SK-N-SH (cell line): ENCODE measurements at regions of chr6 and their contacts with region 1.

Region 1: GRCh38 chr6:131909408-131910218 is 41.6 kb downstream of the CCN2 start:
- DNase-seq: peak; percentile 42
- H3K4me3 ChIP-seq: no peak overlapping the region; a peak in 1 of 4 replicates
- H3K27ac ChIP-seq: no peak overlapping the region
- H3K4me1 ChIP-seq: no peaks in the 10 kb centered on the region
- H3K27me3 ChIP-seq: peaks cover 51% of the 10 kb centered on the region
- CTCF ChIP-seq: peak; percentile 88
- EP300 ChIP-seq: no peak
- RAD21 ChIP-seq: peak; percentile 64

Region 2: DNA sequence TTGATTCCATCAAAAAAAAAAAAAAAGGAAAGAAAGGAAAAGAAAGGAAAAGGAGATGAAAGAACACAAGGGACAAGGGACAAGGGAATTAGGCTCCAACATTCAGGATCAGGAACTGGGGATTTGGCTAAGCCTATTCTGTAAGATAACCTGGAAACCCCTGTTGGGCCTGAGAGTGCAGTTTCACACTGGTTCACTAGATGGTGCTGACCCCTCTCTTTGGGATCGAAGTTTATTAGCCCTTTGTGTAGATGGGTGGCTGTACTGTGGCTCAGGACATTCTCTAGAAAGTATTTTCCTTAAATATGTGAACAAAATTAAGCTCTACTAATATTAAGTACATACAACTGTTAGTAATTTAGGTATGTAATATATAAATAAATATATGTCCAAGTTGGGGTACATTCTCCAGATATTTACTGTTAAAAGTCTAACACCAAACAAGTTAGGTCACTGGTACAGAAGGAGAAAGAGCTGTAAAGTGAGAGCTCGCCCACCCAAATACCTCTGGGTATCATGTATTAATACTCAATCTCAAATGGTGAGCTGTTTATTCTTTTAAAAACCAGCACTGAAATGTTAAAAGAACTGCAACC is 214.7 kb before region 1 on chr6:
- CTCF ChIA-PET with region 1: interaction called, 21 read pairs
- POLR2A ChIA-PET with region 1: no interaction called
- DNase-seq: peak; percentile 60
- H3K4me3 ChIP-seq: peak overlapping the region in 1 of 2 experiments; percentile 46; a peak in 1 of 4 replicates
- H3K27ac ChIP-seq: no peak overlapping the region
- H3K4me1 ChIP-seq: no peaks in the 10 kb centered on the region
- H3K27me3 ChIP-seq: peaks cover 12% of the 10 kb centered on the region; the same call in 1 of the 2 replicates
- CTCF ChIP-seq: peak; percentile 74
- EP300 ChIP-seq: no peak
- RAD21 ChIP-seq: peak; percentile 72

Region 3: DNA sequence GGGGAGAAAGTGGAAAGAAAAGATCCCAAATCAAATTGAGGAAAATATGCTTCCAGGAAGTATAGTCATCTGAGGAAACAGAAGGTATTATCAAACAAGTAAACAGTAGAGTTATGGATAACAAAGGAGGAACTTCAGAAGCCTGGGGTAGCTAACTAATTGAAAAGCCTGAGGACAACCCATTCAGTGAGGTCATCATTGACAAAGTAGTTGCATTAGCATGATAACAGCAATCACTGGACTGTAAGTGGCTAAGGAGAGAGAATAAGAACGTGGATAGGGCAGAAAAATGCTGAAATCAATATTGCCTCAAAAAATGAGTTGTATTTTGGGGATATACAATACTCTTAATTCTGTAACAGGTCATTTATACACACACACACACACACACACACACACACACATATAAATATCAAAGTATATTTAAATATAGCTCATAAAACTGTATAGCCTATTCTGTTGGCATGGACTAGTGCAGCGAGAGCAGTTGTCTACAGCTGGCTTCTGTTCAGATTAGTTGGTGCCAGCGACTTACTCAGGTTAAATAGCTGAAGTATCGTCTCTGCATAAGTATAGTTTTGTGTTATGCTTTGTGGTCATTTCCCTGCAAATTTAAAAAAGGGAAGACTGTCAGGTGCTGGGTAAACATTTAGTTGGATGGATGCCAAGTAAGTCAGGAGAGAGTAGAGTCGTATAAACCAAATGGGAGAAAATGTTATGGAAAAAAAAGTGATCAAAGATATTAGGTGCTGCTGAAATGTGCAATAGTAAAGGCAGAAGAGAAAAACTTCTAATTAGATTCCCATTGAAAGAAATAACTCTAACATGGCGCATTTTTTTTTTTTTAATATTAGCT is 165.0 kb before region 1 on chr6:
- CTCF ChIA-PET with region 1: no interaction called
- POLR2A ChIA-PET with region 1: no interaction called
- DNase-seq: no peak
- H3K4me3 ChIP-seq: no peak overlapping the region
- H3K27ac ChIP-seq: no peak overlapping the region
- H3K4me1 ChIP-seq: no peaks in the 10 kb centered on the region
- H3K27me3 ChIP-seq: peaks cover 12% of the 10 kb centered on the region; the same call in 1 of the 2 replicates
- CTCF ChIP-seq: no peak
- EP300 ChIP-seq: no peak
- RAD21 ChIP-seq: no peak

Region 4: GRCh38 chr6:131897050-131897565 is 12.5 kb before region 1 on chr6:
- CTCF ChIA-PET with region 1: interaction called, 11 read pairs
- POLR2A ChIA-PET with region 1: no interaction called
- DNase-seq: no peak
- H3K4me3 ChIP-seq: no peak overlapping the region
- H3K27ac ChIP-seq: no peak overlapping the region
- H3K4me1 ChIP-seq: no peaks in the 10 kb centered on the region
- H3K27me3 ChIP-seq: peaks cover 33% of the 10 kb centered on the region; the same call in 1 of the 2 replicates
- CTCF ChIP-seq: no peak
- EP300 ChIP-seq: no peak
- RAD21 ChIP-seq: no peak

Region 5: DNA sequence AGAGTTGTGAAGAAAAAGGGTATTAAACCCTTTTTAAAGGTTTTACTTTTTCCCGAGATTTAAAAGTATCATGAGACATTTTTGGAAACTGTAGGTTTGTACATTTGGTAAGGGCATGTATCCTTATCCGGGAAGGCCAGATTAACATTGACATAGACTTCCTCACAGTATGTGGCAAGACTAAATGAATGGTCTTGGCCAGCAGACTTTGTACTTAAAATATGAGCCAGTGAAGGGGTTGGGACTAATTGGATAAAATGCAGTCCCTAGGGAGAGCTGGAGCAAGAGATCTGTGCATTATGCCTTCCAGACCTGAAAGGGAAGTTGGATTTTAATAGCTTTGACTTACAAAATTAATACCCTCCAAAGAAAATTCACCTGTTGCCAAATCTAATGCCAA is 102.0 kb after region 1 on chr6:
- CTCF ChIA-PET with region 1: no interaction called
- POLR2A ChIA-PET with region 1: no interaction called
- DNase-seq: no peak
- H3K4me3 ChIP-seq: no peak overlapping the region
- H3K27ac ChIP-seq: no peak overlapping the region
- H3K4me1 ChIP-seq: peaks cover 0 to 6% of the 10 kb centered on the region in 2 experiments; a peak in 2 of 4 replicates
- H3K27me3 ChIP-seq: no peaks in the 10 kb centered on the region
- CTCF ChIP-seq: no peak
- EP300 ChIP-seq: no peak
- RAD21 ChIP-seq: no peak